CD4-positive, alpha-beta memory T cell (primary cell): ENCODE measurements at regions of chr3 and their contacts with region 1.

Region 1: GRCh38 chr3:59575113-59576001 is 525.5 kb upstream of the CFAP20DC start:
- DNase-seq: peak; percentile 74 to 81 (median 76)
- H3K4me3 ChIP-seq: no peak overlapping the region
- H3K4me3 Mint-ChIP-seq: peak overlapping the region in 1 of 8 donors; percentile 45
- H3K27ac ChIP-seq: no peak overlapping the region
- H3K27ac Mint-ChIP-seq: peak overlapping the region in 1 of 7 donors; percentile 19
- H3K4me1 ChIP-seq: peaks cover 7% of the 10 kb centered on the region
- H3K4me1 Mint-ChIP-seq: peaks cover 0 to 3% (median 0%) of the 10 kb centered on the region in 4 donors
- H3K27me3 ChIP-seq: no peaks in the 10 kb centered on the region
- H3K27me3 Mint-ChIP-seq: no peaks in the 10 kb centered on the region

Region 2: DNA sequence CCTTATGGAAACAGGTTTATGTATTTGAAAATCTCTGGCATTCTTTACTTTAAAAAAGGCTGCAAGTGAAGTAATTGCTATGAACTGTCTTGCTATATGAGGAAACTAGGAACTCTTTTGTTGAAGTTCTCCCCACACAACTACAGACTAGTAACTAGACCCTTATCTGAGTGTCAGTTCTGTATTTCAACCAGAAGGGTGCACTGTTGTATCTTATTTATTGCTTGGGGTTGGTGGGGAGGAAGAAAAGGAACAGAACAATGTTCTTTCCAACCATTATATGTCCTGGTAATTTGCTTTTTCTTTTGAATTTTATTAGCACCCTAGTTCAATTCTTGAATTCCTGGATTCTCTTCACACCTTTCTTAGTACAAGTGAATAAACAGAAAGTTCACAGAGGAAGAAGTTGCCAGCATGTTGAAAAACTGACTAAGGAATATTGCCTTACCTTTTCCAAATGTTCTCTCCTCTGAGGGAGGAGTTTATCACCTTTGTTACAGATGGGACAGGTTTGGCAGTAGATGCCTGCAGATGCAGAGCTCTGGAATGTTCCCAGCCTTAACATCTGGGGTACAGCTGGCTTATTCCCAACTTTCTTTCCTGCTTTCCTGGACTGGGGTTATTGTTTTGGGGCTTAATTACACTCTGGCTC is 363.1 kb before region 1 on chr3:
- CTCF ChIA-PET with region 1: interaction called, 3 read pairs
- POLR2A ChIA-PET with region 1: no interaction called
- intact Hi-C with region 1: loop called (anchors 1 kb)
- DNase-seq: peak in 4 of 5 donors; percentile 40 to 48 (median 42)
- H3K4me3 ChIP-seq: no peak overlapping the region
- H3K4me3 Mint-ChIP-seq: no peak overlapping the region
- H3K27ac ChIP-seq: no peak overlapping the region
- H3K27ac Mint-ChIP-seq: peak overlapping the region in 1 of 7 donors; percentile 38
- H3K4me1 ChIP-seq: no peaks in the 10 kb centered on the region
- H3K4me1 Mint-ChIP-seq: peaks cover 0 to 6% (median 2%) of the 10 kb centered on the region in 4 donors
- H3K27me3 ChIP-seq: no peaks in the 10 kb centered on the region
- H3K27me3 Mint-ChIP-seq: peaks cover 4 to 5% of the 10 kb centered on the region in 2 donors

Region 3: DNA sequence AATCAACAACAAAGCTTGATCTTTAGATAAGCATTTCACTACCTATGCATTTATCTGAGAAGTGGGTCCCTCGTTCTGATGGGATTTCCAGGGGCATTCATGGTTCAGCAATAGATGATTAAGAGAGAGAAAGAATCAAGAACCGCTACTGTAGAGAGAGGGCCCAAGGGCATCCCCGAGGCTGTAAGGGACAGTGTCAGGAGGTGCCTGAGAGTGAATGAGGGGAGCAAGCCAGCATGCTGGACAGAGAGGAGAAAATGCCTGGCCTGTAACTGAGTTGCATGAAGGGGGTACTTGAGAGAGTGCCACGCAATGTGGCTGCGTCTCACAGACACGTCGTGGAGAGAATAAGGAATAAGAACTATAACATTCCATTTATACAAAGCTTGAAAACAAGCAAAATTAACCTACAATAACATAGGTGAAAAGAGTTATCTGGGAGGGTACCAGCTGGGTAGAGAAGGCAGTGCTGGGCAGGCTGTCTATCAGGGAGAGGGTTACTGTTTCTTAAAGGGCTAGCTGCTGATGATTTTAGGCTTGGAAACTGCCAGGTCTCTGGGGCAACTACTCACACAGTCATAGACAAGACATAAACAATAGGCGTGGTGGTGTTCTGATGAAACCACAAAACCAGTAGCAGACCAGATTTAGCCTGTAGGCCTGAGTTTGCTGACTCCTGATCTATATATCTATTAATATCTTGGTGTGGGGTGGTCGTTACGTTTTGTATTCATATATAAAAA is 150.9 kb before region 1 on chr3:
- CTCF ChIA-PET with region 1: interaction called, 12 read pairs
- POLR2A ChIA-PET with region 1: no interaction called
- intact Hi-C with region 1: no loop called
- DNase-seq: peak; percentile 62 to 78 (median 70)
- H3K4me3 ChIP-seq: peak overlapping the region in 1 of 2 donors; percentile 10
- H3K4me3 Mint-ChIP-seq: peak overlapping the region; percentile 50 to 79 (median 62)
- H3K27ac ChIP-seq: no peak overlapping the region
- H3K27ac Mint-ChIP-seq: peak overlapping the region; percentile 68 to 96 (median 93)
- H3K4me1 ChIP-seq: peaks cover 47% of the 10 kb centered on the region
- H3K4me1 Mint-ChIP-seq: peaks cover 45 to 66% (median 55%) of the 10 kb centered on the region in 4 donors
- H3K27me3 ChIP-seq: no peaks in the 10 kb centered on the region
- H3K27me3 Mint-ChIP-seq: no peaks in the 10 kb centered on the region

Region 4: DNA sequence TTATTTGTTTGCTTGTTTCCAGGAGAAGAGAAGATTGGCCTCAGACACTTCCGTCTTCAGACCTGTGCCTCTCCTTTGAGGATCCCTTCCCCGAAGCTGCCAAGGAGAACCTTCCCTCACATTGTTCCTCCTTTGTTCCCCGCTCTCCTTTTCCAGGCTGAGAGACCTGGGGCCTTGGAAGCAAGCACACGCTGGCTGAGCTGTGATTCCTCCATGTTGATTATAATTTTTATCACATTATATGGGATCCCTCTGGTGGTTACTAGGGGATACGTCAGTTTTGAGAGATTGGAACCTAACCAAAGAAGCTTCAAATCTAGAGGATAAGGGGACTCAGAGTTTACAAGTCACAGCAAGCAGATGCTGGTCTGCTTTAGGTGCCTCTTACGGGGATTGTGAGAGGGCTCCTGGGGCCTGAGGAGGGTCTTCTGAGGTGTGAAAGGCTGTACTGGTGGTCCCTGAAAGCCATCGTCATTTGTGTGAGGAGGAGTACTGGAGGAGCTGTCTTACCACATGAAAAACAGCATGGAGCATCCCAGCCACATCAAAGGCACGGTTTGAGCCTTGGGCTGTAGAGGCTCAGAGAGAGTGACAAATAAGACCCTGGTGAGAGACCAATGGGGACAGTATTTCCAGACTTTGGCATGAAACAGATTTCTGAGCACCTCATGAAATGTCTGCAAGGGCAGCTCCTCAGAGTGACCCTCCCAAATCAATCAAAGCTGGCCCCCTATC is 234.5 kb after region 1 on chr3:
- CTCF ChIA-PET with region 1: interaction called, 19 read pairs
- POLR2A ChIA-PET with region 1: no interaction called
- intact Hi-C with region 1: no loop called
- DNase-seq: peak in 4 of 5 donors; percentile 5 to 18 (median 14)
- H3K4me3 ChIP-seq: no peak overlapping the region
- H3K4me3 Mint-ChIP-seq: no peak overlapping the region
- H3K27ac ChIP-seq: no peak overlapping the region
- H3K27ac Mint-ChIP-seq: peak overlapping the region in 2 of 7 donors; percentile 36 to 43
- H3K4me1 ChIP-seq: no peaks in the 10 kb centered on the region
- H3K4me1 Mint-ChIP-seq: peaks cover 1 to 13% (median 6%) of the 10 kb centered on the region in 4 donors
- H3K27me3 ChIP-seq: no peaks in the 10 kb centered on the region
- H3K27me3 Mint-ChIP-seq: no peaks in the 10 kb centered on the region

Region 5: GRCh38 chr3:60431599-60431958 is 856.2 kb after region 1 on chr3:
- CTCF ChIA-PET with region 1: interaction called, 3 read pairs
- POLR2A ChIA-PET with region 1: no interaction called
- intact Hi-C with region 1: loop called (anchors 2 kb)
- DNase-seq: no peak
- H3K4me3 ChIP-seq: no peak overlapping the region
- H3K4me3 Mint-ChIP-seq: no peak overlapping the region
- H3K27ac ChIP-seq: no peak overlapping the region
- H3K27ac Mint-ChIP-seq: peak overlapping the region in 1 of 7 donors; percentile 19
- H3K4me1 ChIP-seq: no peaks in the 10 kb centered on the region
- H3K4me1 Mint-ChIP-seq: no peaks in the 10 kb centered on the region
- H3K27me3 ChIP-seq: no peaks in the 10 kb centered on the region
- H3K27me3 Mint-ChIP-seq: no peaks in the 10 kb centered on the region

Region 6: DNA sequence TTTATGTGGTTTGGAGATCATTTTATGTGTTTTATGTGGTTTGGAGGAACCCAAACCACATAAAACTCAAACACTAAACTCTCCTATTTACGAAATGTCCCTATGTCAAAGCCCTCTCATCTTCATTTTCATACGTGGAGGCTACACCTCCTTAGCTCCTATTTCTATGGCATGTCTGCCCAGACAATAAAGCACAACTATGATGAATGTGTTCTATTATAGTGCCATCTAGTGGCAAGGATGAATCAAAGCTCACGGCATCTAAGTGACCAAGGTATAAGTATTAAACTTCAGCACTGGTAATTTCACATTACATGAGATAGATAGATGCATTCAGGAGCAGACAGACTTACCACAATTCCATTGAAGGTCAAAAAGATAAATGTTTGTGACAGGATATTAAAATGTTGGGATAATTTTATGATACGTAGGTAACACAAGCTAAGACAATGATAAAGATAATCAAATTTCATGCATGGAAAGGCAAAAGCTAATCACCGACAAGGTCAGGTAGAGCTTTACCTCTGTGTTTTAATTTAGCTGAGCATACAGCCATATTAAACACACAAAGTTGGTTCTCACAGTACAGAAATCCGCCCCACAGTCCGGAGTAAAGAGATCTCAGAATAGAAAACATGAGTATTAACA is 1806.5 kb after region 1 on chr3:
- CTCF ChIA-PET with region 1: interaction called, 9 read pairs
- POLR2A ChIA-PET with region 1: no interaction called
- intact Hi-C with region 1: loop called (anchors 1 kb)
- DNase-seq: peak in 4 of 5 donors; percentile 34 to 40 (median 36)
- H3K4me3 ChIP-seq: no peak overlapping the region
- H3K4me3 Mint-ChIP-seq: no peak overlapping the region
- H3K27ac ChIP-seq: no peak overlapping the region
- H3K27ac Mint-ChIP-seq: no peak overlapping the region
- H3K4me1 ChIP-seq: no peaks in the 10 kb centered on the region
- H3K4me1 Mint-ChIP-seq: peaks cover 0 to 5% (median 4%) of the 10 kb centered on the region in 4 donors
- H3K27me3 ChIP-seq: no peaks in the 10 kb centered on the region
- H3K27me3 Mint-ChIP-seq: peaks cover 16% of the 10 kb centered on the region in 2 donors